Ascending aorta (tissue), 2 donors: ENCODE measurements at regions of chrX and their contacts with region 1.

Region 1: DNA sequence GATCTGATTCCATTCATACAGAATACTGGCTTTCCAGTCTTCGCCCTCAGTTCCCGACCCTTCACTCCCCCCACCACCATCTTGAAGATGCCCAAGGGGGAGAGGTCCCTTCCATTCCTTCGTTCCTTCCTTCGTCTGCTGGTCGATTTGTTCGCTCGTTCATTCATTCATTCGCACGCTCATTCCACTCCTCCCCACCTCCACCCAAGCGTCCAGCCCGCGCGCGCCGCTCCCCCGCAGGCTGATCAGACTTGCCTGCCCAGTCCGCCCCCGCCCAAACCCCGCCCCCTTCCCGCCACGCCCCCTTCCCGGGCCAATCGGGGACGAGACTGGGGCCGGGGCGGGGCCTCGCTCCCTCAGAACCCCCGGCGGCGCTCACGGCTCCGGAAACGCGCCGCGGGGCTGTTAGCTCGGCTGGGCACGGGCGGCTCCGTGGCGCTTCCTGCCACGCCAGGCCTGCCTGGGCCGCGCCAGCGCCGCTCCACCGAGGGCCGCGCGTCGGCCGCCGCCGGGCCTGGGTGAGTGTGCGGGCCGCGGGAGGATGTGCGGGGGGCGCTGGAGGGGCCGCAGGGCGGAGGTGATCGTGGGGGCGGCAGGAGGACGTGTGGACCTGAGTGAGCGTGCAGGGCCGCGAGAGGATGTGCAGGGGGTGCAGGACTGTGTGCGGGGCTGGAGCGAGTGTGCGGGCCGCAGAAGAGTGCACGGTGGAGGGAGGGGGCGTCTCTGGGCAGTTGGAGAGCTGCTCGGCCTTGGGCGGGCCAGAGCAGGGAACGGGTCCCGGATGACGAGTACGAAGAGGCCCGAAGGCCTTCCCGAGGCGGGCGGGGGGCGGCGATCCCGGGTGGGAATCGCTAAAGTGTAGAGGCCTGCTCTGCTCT is at the start of gene ZNF275:
- DNase-seq: peak in 1 of 2 donors; percentile 88
- H3K4me3 ChIP-seq: peak within 1 kb of the TSS; percentile 70
- H3K27ac ChIP-seq: peak within 1 kb of the TSS in 1 of 2 donors; percentile 37
- H3K4me1 ChIP-seq: peaks cover 0 to 5% of the 10 kb centered on the region in 2 donors
- H3K27me3 ChIP-seq: no peaks in the 10 kb centered on the region
- CTCF ChIP-seq: no peak
- total RNA-seq, gene ZNF275: 2.2 TPM

Region 2: GRCh38 chrX:153349952-153350351 is 15.9 kb after region 1 on chrX:
- intact Hi-C with region 1: no loop called
- DNase-seq: no peak
- H3K4me3 ChIP-seq: no peak overlapping the region
- H3K27ac ChIP-seq: no peak overlapping the region
- H3K4me1 ChIP-seq: no peaks in the 10 kb centered on the region
- H3K27me3 ChIP-seq: no peaks in the 10 kb centered on the region
- CTCF ChIP-seq: no peak

Region 3: DNA sequence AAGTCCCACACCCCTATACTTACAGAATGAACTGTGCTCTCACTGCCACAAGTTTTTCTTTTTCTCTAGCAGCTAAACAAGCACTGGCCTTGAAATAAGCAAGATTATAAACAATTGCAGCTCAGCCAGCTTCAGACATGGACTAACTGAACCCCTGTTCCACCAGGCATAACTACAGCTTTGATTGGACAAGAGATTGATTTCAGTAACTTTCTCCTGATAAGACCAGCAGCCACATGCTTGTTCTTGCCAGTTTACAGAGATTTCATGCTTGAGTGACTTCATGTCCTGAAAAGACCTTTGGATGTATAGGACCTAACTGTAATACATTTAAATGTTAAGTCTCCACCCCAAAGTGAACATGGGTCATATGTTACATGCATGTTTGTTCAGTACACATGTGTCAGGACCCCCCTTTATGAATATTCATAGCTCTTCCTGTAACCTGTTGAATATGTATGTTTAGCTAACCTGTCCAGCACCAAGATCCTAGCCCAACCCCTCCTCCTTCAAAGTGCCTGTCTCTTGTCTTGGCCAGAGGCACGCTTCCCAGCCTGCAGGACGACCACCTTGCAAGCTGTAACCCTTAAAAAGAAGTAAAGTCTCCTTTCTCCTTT is 27.9 kb after region 1 on chrX:
- intact Hi-C with region 1: no loop called
- DNase-seq: no peak
- H3K4me3 ChIP-seq: no peak overlapping the region
- H3K27ac ChIP-seq: no peak overlapping the region
- H3K4me1 ChIP-seq: no peaks in the 10 kb centered on the region
- H3K27me3 ChIP-seq: no peaks in the 10 kb centered on the region
- CTCF ChIP-seq: no peak

Region 4: GRCh38 chrX:153460845-153461244 is 126.8 kb after region 1 on chrX:
- intact Hi-C with region 1: loop called (anchors 10 kb)
- DNase-seq: no peak
- H3K4me3 ChIP-seq: no peak overlapping the region
- H3K27ac ChIP-seq: no peak overlapping the region
- H3K4me1 ChIP-seq: no peaks in the 10 kb centered on the region
- H3K27me3 ChIP-seq: no peaks in the 10 kb centered on the region
- CTCF ChIP-seq: peak; percentile 25 to 59 (median 40)

Region 5: GRCh38 chrX:153519569-153520283 is 185.7 kb after region 1 on chrX:
- intact Hi-C with region 1: loop called (anchors 5 kb)
- DNase-seq: no peak
- H3K4me3 ChIP-seq: no peak overlapping the region
- H3K27ac ChIP-seq: no peak overlapping the region
- H3K4me1 ChIP-seq: no peaks in the 10 kb centered on the region
- H3K27me3 ChIP-seq: peaks cover 8% of the 10 kb centered on the region
- CTCF ChIP-seq: no peak